GM12878 (cell line): ENCODE measurements at regions of chr12 and their contacts with region 1.

Region 1: GRCh38 chr12:128969480-128970055 is 116.3 kb downstream of the GLT1D1 start:
- DNase-seq: peak; percentile 20
- ATAC-seq: peak; percentile 95
- H3K4me3 ChIP-seq: no peak overlapping the region
- H3K27ac ChIP-seq: no peak overlapping the region
- H3K4me1 ChIP-seq: peaks cover 5% of the 10 kb centered on the region; the same call in 1 of the 2 replicates
- H3K27me3 ChIP-seq: no peaks in the 10 kb centered on the region
- CTCF ChIP-seq: peak; percentile 67 to 83 (median 81)
- EP300 ChIP-seq: no peak
- POLR2A ChIP-seq: no peak
- RAD21 ChIP-seq: peak; percentile 73

Region 2: GRCh38 chr12:128951448-128951847 is 18.1 kb before region 1 on chr12:
- CTCF ChIA-PET with region 1: interaction called, 12 read pairs
- POLR2A ChIA-PET with region 1: no interaction called
- RAD21 ChIA-PET with region 1: interaction called, 3 read pairs
- SMC1A ChIA-PET with region 1: interaction called, 4 read pairs
- in situ Hi-C with region 1: no loop called
- intact Hi-C with region 1: no loop called
- DNase-seq: no peak
- ATAC-seq: no peak
- H3K4me3 ChIP-seq: no peak overlapping the region
- H3K27ac ChIP-seq: no peak overlapping the region
- H3K4me1 ChIP-seq: no peaks in the 10 kb centered on the region
- H3K27me3 ChIP-seq: no peaks in the 10 kb centered on the region
- CTCF ChIP-seq: no peak
- EP300 ChIP-seq: no peak
- POLR2A ChIP-seq: no peak
- RAD21 ChIP-seq: no peak

Region 3: DNA sequence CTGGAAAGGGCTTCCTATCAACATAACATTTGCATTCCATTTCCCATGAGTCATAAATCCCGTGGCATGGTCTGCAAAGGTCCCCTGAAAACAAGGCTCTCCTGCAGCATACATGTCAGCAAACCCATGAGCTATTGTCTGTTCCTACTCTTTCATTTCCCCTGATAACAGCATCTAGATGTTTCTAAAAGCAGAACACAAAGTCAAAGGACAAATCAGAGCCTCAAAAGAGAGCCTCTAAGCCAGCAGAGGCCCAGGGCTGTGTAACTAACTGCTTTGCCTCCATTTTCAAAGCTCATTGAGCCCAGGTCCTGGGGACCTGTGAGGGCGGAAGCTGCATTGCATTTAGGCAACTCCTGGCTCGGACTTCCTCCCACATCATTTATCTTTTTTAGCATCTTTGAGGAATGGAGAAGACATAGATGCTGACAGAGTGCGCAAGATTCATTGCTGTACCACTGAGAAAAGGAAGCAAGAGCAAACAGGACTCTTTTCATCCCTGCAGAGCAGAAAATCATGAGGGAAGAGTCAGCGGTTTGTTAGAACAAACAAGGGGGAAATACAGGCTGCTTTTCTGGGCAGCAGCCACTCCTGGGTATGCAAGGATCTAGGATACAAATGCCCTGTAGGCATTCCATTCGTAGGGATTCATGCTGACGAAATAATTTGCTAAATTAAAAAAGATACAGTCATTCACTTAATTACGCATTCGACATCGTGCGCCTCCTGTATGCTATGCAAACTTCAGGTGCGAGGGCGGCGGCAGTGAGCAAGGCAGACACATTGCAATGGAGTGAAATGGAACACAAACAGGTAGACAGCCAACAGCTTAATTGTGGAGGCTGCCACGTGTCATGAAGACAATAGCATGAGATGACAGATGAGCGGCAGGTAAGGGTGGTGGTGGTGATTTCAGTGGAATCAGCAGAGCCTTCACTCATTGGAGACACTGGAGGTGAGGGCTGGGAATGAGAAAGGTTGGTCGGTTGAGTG is 803.2 kb after region 1 on chr12:
- CTCF ChIA-PET with region 1: no interaction called
- POLR2A ChIA-PET with region 1: no interaction called
- RAD21 ChIA-PET with region 1: no interaction called
- SMC1A ChIA-PET with region 1: no interaction called
- in situ Hi-C with region 1: no loop called
- intact Hi-C with region 1: no loop called
- DNase-seq: no peak
- ATAC-seq: no peak
- H3K4me3 ChIP-seq: no peak overlapping the region
- H3K27ac ChIP-seq: no peak overlapping the region
- H3K4me1 ChIP-seq: no peaks in the 10 kb centered on the region
- H3K27me3 ChIP-seq: no peaks in the 10 kb centered on the region
- CTCF ChIP-seq: no peak
- EP300 ChIP-seq: no peak
- POLR2A ChIP-seq: no peak
- RAD21 ChIP-seq: no peak